ENCODE measurements at regions of chr7 and their contacts with region 1.

Region 1: DNA sequence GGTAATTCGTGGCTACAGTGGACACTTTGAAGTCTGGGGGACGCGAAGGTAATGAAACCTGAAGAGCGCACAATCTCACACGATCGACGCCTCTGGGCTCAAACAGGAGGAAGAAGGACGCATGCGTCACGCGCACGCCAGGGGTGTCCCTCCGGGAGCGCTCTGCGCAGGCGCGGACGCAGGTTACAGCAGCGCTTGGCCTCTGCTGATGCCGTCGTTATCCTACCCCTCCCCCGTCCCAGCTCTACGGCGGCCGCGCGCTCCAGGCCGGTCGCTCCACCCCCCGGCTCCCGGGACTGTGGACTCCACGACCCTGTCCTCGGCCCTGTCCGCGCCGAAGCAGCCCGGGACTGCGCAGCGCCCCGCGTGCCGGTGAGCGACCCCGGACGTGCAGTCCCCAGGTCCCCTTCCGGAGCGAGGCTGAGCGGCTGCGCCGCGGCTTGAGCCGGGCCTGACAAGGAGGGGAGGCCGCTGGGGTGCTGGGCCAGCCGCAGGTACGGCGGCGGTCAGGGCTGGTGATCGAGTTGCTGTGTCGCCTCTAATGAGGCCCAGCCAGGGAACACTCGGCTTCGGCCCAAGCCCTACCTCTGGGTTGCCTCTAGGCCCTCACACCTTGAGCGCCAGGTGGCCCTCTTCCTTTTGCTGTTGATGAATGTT is at the start of gene TMEM106B:
- DNase-seq: peak; percentile 92 to 100 (median 96)
- ATAC-seq: peak; percentile 87
- H3K4me3 ChIP-seq: peak within 1 kb of the TSS; percentile 82
- H3K4me3 Mint-ChIP-seq: peak within 1 kb of the TSS; percentile 99
- H3K27ac ChIP-seq: peak within 1 kb of the TSS; percentile 93 to 98
- H3K27ac Mint-ChIP-seq: peak within 1 kb of the TSS; percentile 100
- H3K4me1 ChIP-seq: peaks cover 19% of the 10 kb centered on the region
- H3K4me1 Mint-ChIP-seq: peaks cover 47% of the 10 kb centered on the region
- H3K27me3 ChIP-seq: no peaks in the 10 kb centered on the region
- H3K27me3 Mint-ChIP-seq: no peaks in the 10 kb centered on the region
- CTCF ChIP-seq: peak; percentile 59
- total RNA-seq, gene TMEM106B: 16.9 to 17.5 TPM

Region 2: DNA sequence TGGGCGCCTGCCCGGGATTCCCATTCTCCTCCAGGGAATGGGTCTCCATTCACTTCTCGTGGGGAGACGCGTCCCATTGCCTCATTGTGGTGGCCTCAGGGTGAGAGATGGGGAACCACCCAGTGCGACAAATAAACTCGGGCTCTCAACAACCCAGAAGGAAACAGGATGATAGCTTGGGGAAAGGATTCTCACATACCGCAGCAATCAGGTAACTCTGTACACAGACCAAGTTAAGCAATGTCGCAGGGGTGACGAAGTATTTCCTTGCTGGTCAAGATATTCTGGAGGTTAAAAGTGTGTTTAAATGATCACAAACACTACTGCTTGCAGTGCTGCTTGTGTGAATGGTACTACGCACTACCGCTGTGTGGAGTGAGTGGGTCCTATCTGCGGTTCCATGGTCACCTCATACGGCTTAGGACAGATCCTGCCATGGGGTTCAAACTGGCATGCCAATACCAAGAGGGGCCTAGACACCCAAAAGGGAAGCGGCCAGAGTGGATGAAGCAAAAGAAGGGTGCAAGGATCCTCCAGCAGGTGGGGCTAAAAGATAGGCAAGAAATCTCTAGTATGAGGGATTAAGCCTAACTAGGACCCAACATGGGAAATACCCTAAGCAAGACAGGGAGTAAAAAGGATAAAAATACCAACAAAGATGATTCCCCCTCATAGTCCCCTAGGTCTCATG is 143.9 kb before region 1 on chr7:
- CTCF ChIA-PET with region 1: no interaction called
- POLR2A ChIA-PET with region 1: interaction called, 3 read pairs
- intact Hi-C with region 1: loop called in 1 of 2 experiments (anchors 5 kb)
- DNase-seq: peak; percentile 23 to 79 (median 46)
- ATAC-seq: peak; percentile 64
- H3K4me3 ChIP-seq: no peak overlapping the region
- H3K4me3 Mint-ChIP-seq: no peak overlapping the region
- H3K27ac ChIP-seq: no peak overlapping the region
- H3K27ac Mint-ChIP-seq: no peak overlapping the region
- H3K4me1 ChIP-seq: no peaks in the 10 kb centered on the region
- H3K4me1 Mint-ChIP-seq: no peaks in the 10 kb centered on the region
- H3K27me3 ChIP-seq: no peaks in the 10 kb centered on the region
- H3K27me3 Mint-ChIP-seq: no peaks in the 10 kb centered on the region
- CTCF ChIP-seq: peak; percentile 79

Region 3: DNA sequence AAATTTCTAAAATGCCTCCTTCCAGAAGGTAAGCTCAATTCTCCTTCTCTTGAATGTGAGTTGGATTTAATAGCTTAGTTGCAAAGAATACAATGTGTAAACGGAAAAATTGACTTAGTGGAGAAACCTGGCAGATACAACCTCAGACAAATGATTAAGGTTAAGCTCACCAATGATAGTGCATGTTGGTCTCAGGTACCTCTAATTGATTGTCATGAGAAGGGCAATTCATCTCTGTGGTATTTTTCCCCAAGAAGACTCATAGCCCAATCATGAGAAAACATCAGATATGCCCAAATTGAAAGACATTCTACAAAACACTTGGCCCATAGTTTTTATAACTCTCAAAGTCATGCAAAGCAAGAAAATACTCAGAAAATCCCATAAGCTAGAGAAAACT is 36.3 kb before region 1 on chr7:
- CTCF ChIA-PET with region 1: no interaction called
- POLR2A ChIA-PET with region 1: interaction called, 27 read pairs
- intact Hi-C with region 1: loop called in 1 of 2 experiments (anchors 2 kb)
- DNase-seq: no peak
- ATAC-seq: no peak
- H3K4me3 ChIP-seq: no peak overlapping the region
- H3K4me3 Mint-ChIP-seq: no peak overlapping the region
- H3K27ac ChIP-seq: no peak overlapping the region
- H3K27ac Mint-ChIP-seq: no peak overlapping the region
- H3K4me1 ChIP-seq: peaks cover 12% of the 10 kb centered on the region
- H3K4me1 Mint-ChIP-seq: peaks cover 21% of the 10 kb centered on the region
- H3K27me3 ChIP-seq: no peaks in the 10 kb centered on the region
- H3K27me3 Mint-ChIP-seq: peaks cover 4% of the 10 kb centered on the region
- CTCF ChIP-seq: no peak

Region 4: GRCh38 chr7:12199363-12199762 is 11.8 kb before region 1 on chr7:
- CTCF ChIA-PET with region 1: no interaction called
- POLR2A ChIA-PET with region 1: interaction called, 10 read pairs
- intact Hi-C with region 1: no loop called
- DNase-seq: no peak
- ATAC-seq: no peak
- H3K4me3 ChIP-seq: no peak overlapping the region
- H3K4me3 Mint-ChIP-seq: no peak overlapping the region
- H3K27ac ChIP-seq: no peak overlapping the region
- H3K27ac Mint-ChIP-seq: no peak overlapping the region
- H3K4me1 ChIP-seq: no peaks in the 10 kb centered on the region
- H3K4me1 Mint-ChIP-seq: no peaks in the 10 kb centered on the region
- H3K27me3 ChIP-seq: no peaks in the 10 kb centered on the region
- H3K27me3 Mint-ChIP-seq: no peaks in the 10 kb centered on the region
- CTCF ChIP-seq: no peak

Region 5: DNA sequence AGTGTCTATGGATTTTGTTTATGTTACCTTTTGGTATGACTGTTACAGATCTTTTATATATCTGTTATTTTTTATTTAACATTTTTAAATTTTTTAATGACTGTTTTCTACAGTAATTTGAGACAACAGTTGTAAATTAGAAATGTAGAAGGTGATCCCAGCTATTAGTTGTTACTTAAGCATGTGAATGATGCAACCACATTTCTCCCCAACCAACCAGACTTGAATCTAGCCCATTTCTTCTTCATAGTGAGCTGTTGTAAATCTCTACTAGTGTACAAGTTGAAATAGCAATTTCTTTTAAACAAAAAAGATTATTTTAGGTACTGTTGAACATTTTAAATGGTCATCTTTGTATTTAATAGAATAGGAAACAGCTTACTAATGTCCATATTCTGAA is 17.9 kb after region 1 on chr7:
- CTCF ChIA-PET with region 1: interaction called, 5 read pairs
- POLR2A ChIA-PET with region 1: interaction called, 3 read pairs
- intact Hi-C with region 1: loop called in 1 of 2 experiments (anchors 2 kb)
- DNase-seq: no peak
- ATAC-seq: no peak
- H3K4me3 ChIP-seq: no peak overlapping the region
- H3K4me3 Mint-ChIP-seq: no peak overlapping the region
- H3K27ac ChIP-seq: no peak overlapping the region
- H3K27ac Mint-ChIP-seq: no peak overlapping the region
- H3K4me1 ChIP-seq: peaks cover under 1% of the 10 kb centered on the region
- H3K4me1 Mint-ChIP-seq: peaks cover 23% of the 10 kb centered on the region
- H3K27me3 ChIP-seq: no peaks in the 10 kb centered on the region
- H3K27me3 Mint-ChIP-seq: no peaks in the 10 kb centered on the region
- CTCF ChIP-seq: no peak

Region 6: DNA sequence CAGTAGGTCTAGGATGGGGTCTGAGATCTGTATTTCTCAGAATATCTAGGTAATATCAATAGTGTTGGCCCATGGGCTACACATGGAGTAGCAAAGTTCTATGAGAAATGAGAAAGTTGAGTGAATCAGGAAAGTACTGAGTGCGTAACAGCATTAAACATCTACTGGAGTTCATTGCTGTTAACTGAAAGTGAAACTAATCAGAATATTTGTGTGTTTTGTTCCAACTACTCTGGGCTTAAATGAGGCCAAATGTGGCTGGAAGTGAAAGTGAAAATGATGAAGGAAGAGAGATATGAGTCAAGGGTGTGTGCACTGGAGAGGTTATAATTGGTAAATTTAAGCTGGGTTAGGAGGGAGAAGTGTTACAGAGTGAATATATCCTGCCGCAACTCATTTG is 46.4 kb after region 1 on chr7:
- CTCF ChIA-PET with region 1: interaction called, 4 read pairs
- POLR2A ChIA-PET with region 1: interaction called, 36 read pairs
- intact Hi-C with region 1: loop called (anchors 2 kb)
- DNase-seq: peak in 5 of 14 experiments; percentile 11 to 94 (median 80)
- ATAC-seq: peak; percentile 94
- H3K4me3 ChIP-seq: peak overlapping the region; percentile 44
- H3K4me3 Mint-ChIP-seq: no peak overlapping the region
- H3K27ac ChIP-seq: peak overlapping the region; percentile 37 to 75
- H3K27ac Mint-ChIP-seq: no peak overlapping the region
- H3K4me1 ChIP-seq: peaks cover 12% of the 10 kb centered on the region
- H3K4me1 Mint-ChIP-seq: no peaks in the 10 kb centered on the region
- H3K27me3 ChIP-seq: no peaks in the 10 kb centered on the region
- H3K27me3 Mint-ChIP-seq: no peaks in the 10 kb centered on the region
- CTCF ChIP-seq: no peak

Region 7: GRCh38 chr7:12403287-12404181 is 192.4 kb after region 1 on chr7 and contains the start of gene VWDE:
- CTCF ChIA-PET with region 1: no interaction called
- POLR2A ChIA-PET with region 1: no interaction called
- intact Hi-C with region 1: loop called in 1 of 2 experiments (anchors 10 kb)
- DNase-seq: peak in 12 of 14 experiments; percentile 7 to 81 (median 39)
- ATAC-seq: peak; percentile 85
- H3K4me3 ChIP-seq: peak within 1 kb of the TSS; percentile 69
- H3K4me3 Mint-ChIP-seq: peak within 1 kb of the TSS; percentile 92
- H3K27ac ChIP-seq: peak within 1 kb of the TSS in 1 of 2 donors; percentile 10
- H3K27ac Mint-ChIP-seq: peak within 1 kb of the TSS; percentile 79
- H3K4me1 ChIP-seq: peaks cover 19% of the 10 kb centered on the region
- H3K4me1 Mint-ChIP-seq: peaks cover 16% of the 10 kb centered on the region
- H3K27me3 ChIP-seq: no peaks in the 10 kb centered on the region
- H3K27me3 Mint-ChIP-seq: peaks cover 21% of the 10 kb centered on the region
- CTCF ChIP-seq: no peak
- total RNA-seq, gene VWDE: 1.5 TPM

Measured in CD4-positive, alpha-beta T cell (primary cell).